ENCODE measurements at regions of chr16 and their contacts with region 1.

Region 1: GRCh38 chr16:83826146-83826913 is 18.6 kb downstream of the HSBP1 start:
- DNase-seq: peak; percentile 83
- ATAC-seq: peak; percentile 94
- H3K4me3 ChIP-seq: no peak overlapping the region
- H3K4me3 Mint-ChIP-seq: no peak overlapping the region
- H3K27ac ChIP-seq: no peak overlapping the region
- H3K27ac Mint-ChIP-seq: peak overlapping the region; percentile 55
- H3K4me1 ChIP-seq: peaks cover 0 to 11% of the 10 kb centered on the region in 2 donors
- H3K4me1 Mint-ChIP-seq: peaks cover 6% of the 10 kb centered on the region
- H3K27me3 ChIP-seq: peaks cover 0 to 2% (median 0%) of the 10 kb centered on the region in 4 experiments
- H3K27me3 Mint-ChIP-seq: peaks cover 8% of the 10 kb centered on the region
- CTCF ChIP-seq: peak; percentile 98

Region 2: DNA sequence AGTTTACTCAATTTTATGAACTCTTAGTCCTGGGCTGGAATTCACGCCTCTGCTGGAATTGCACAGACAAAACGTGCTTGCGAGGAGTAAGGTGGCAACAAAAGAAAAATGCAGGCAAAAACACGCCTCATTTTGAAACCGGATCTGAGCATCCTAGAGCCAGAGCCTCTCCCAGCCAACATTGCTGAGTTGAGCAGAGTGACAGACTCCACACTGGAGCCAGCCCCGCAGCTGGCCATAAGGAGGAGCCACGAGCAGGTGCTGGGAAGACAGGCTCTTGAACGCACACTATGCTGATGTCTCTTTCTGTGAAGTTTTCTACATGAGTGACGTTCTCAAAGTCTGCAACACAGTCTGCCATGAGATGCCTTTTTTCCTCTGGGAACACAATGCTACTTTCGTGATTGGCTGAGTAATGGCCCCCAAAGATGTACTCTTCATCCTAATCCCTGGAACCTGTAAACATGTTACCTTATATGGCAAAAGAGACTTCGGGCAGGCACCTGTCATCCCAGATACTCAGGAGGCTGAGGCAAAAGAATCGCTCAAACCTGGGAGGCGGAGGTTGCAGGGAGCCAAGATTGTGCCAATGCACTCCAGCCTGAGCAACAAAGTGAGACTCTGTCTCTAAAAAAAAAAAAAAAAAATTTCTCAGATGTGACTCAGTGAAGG is 33.0 kb before region 1 on chr16:
- CTCF ChIA-PET with region 1: no interaction called
- POLR2A ChIA-PET with region 1: no interaction called
- intact Hi-C with region 1: no loop called
- DNase-seq: no peak
- ATAC-seq: no peak
- H3K4me3 ChIP-seq: no peak overlapping the region
- H3K4me3 Mint-ChIP-seq: no peak overlapping the region
- H3K27ac ChIP-seq: no peak overlapping the region
- H3K27ac Mint-ChIP-seq: no peak overlapping the region
- H3K4me1 ChIP-seq: no peaks in the 10 kb centered on the region
- H3K4me1 Mint-ChIP-seq: no peaks in the 10 kb centered on the region
- H3K27me3 ChIP-seq: no peaks in the 10 kb centered on the region
- H3K27me3 Mint-ChIP-seq: no peaks in the 10 kb centered on the region
- CTCF ChIP-seq: no peak

Region 3: DNA sequence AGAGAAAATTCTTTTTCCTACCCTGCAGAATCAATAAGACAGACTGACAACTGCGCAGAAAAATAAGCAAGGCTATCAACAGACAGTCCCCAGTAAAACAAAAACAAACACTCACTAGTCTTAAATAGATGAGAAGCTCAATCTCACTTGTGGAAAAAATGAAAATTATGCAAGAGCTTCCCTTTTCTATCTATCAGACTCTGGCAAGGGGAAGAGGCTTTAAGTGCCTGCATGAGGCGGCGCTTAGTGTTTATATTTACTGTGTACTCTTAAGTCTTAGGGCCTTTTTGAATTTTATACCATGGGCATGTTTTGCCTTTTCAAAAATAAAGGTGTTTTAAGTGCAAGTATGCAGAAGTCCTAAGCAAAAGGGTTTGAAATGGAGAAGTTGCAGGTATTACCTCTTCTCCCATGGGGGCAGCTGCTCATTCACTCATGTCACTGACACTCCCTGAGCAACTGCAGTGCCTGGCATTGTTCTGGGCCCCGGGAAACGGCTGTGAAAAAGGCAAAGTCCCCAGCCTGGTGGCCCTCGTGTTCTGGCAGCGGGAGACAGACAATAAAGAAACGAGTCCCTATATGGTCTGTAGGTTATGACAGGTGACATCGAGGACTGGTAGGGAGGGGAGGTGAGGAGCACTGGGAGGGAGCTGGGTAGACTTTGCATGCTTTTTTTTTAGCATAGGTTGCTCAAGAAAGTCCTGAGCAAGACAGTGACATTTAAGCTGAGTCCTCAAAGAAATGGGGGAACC is 16.6 kb after region 1 on chr16:
- CTCF ChIA-PET with region 1: interaction called, 37 read pairs
- POLR2A ChIA-PET with region 1: no interaction called
- intact Hi-C with region 1: no loop called
- DNase-seq: peak; percentile 79
- ATAC-seq: peak; percentile 89
- H3K4me3 ChIP-seq: peak overlapping the region in 3 of 5 experiments; percentile 15 to 47 (median 21)
- H3K4me3 Mint-ChIP-seq: peak overlapping the region; percentile 71
- H3K27ac ChIP-seq: peak overlapping the region; percentile 63 to 65
- H3K27ac Mint-ChIP-seq: peak overlapping the region; percentile 90
- H3K4me1 ChIP-seq: peaks cover 42 to 48% of the 10 kb centered on the region in 2 donors
- H3K4me1 Mint-ChIP-seq: peaks cover 47% of the 10 kb centered on the region
- H3K27me3 ChIP-seq: no peaks in the 10 kb centered on the region
- H3K27me3 Mint-ChIP-seq: peaks cover 3% of the 10 kb centered on the region
- CTCF ChIP-seq: no peak

Region 4: DNA sequence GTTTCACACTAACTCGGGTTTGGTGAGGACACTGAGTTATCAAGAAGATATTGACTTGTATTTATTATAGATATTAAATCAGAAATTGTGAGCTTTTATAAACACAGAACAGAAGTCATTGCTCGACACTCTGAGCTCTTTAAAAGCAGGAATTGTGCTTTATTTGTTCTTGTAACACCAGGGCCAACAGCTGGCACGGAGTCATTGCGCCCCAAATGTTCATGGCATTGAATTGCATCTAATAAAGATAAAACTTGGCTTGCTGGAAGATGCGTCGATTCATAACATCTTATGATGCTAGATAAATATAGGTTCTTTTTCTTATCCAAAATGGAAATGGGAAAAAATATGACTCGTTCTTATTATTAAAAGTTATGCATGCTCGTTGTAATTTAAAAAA is 60.8 kb after region 1 on chr16:
- CTCF ChIA-PET with region 1: interaction called, 17 read pairs
- POLR2A ChIA-PET with region 1: no interaction called
- intact Hi-C with region 1: no loop called
- DNase-seq: no peak
- ATAC-seq: no peak
- H3K4me3 ChIP-seq: no peak overlapping the region
- H3K4me3 Mint-ChIP-seq: no peak overlapping the region
- H3K27ac ChIP-seq: no peak overlapping the region
- H3K27ac Mint-ChIP-seq: no peak overlapping the region
- H3K4me1 ChIP-seq: no peaks in the 10 kb centered on the region
- H3K4me1 Mint-ChIP-seq: no peaks in the 10 kb centered on the region
- H3K27me3 ChIP-seq: no peaks in the 10 kb centered on the region
- H3K27me3 Mint-ChIP-seq: peaks cover 9% of the 10 kb centered on the region
- CTCF ChIP-seq: no peak

Region 5: GRCh38 chr16:83926726-83927397 is 100.5 kb after region 1 on chr16:
- CTCF ChIA-PET with region 1: interaction called, 39 read pairs
- POLR2A ChIA-PET with region 1: no interaction called
- intact Hi-C with region 1: loop called (anchors 1 kb)
- DNase-seq: peak; percentile 59
- ATAC-seq: peak; percentile 62
- H3K4me3 ChIP-seq: no peak overlapping the region
- H3K4me3 Mint-ChIP-seq: no peak overlapping the region
- H3K27ac ChIP-seq: no peak overlapping the region
- H3K27ac Mint-ChIP-seq: peak overlapping the region; percentile 7
- H3K4me1 ChIP-seq: no peaks in the 10 kb centered on the region
- H3K4me1 Mint-ChIP-seq: no peaks in the 10 kb centered on the region
- H3K27me3 ChIP-seq: no peaks in the 10 kb centered on the region
- H3K27me3 Mint-ChIP-seq: no peaks in the 10 kb centered on the region
- CTCF ChIP-seq: peak; percentile 93

Region 6: DNA sequence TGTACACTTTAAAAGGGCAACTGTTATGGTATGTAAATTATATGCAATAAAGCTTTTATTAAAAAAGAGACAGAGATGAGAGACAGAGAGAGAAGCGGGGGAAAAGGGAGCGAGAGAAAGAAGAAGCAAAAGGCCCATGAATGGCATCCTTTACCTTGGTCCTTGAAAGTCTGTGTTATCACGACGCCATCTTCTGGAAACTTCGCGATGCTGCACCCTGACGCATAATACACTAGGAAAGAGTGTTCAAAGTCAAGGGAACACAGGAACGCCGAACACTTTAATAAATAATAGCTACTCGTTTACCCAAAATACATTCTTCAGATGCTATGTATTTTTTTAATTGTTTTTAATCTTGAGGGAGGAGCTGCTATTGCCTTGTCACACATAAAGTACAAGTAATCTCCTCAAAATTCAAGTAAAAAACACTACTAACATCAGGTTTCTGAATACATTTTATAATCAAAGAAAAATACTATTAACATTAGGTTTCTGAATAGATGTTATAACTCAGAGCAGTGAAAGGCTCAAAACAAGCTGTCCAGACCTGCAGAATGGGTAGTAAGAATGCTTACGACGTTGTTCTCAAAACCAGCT is 239.3 kb after region 1 on chr16:
- CTCF ChIA-PET with region 1: interaction called, 17 read pairs
- POLR2A ChIA-PET with region 1: no interaction called
- intact Hi-C with region 1: no loop called
- DNase-seq: peak; percentile 37
- ATAC-seq: peak; percentile 45
- H3K4me3 ChIP-seq: no peak overlapping the region
- H3K4me3 Mint-ChIP-seq: no peak overlapping the region
- H3K27ac ChIP-seq: no peak overlapping the region
- H3K27ac Mint-ChIP-seq: no peak overlapping the region
- H3K4me1 ChIP-seq: no peaks in the 10 kb centered on the region
- H3K4me1 Mint-ChIP-seq: no peaks in the 10 kb centered on the region
- H3K27me3 ChIP-seq: no peaks in the 10 kb centered on the region
- H3K27me3 Mint-ChIP-seq: no peaks in the 10 kb centered on the region
- CTCF ChIP-seq: peak; percentile 71

Region 7: GRCh38 chr16:84898447-84898846 is 1072.1 kb after region 1 on chr16:
- CTCF ChIA-PET with region 1: no interaction called
- POLR2A ChIA-PET with region 1: no interaction called
- intact Hi-C with region 1: no loop called
- DNase-seq: no peak
- ATAC-seq: no peak
- H3K4me3 ChIP-seq: no peak overlapping the region
- H3K4me3 Mint-ChIP-seq: no peak overlapping the region
- H3K27ac ChIP-seq: no peak overlapping the region
- H3K27ac Mint-ChIP-seq: no peak overlapping the region
- H3K4me1 ChIP-seq: no peaks in the 10 kb centered on the region
- H3K4me1 Mint-ChIP-seq: no peaks in the 10 kb centered on the region
- H3K27me3 ChIP-seq: peaks cover 0 to 2% (median 0%) of the 10 kb centered on the region in 4 experiments
- H3K27me3 Mint-ChIP-seq: peaks cover 6% of the 10 kb centered on the region
- CTCF ChIP-seq: no peak